GM23248 (cell line): ENCODE measurements at regions of chr4 and their contacts with region 1.

Region 1: DNA sequence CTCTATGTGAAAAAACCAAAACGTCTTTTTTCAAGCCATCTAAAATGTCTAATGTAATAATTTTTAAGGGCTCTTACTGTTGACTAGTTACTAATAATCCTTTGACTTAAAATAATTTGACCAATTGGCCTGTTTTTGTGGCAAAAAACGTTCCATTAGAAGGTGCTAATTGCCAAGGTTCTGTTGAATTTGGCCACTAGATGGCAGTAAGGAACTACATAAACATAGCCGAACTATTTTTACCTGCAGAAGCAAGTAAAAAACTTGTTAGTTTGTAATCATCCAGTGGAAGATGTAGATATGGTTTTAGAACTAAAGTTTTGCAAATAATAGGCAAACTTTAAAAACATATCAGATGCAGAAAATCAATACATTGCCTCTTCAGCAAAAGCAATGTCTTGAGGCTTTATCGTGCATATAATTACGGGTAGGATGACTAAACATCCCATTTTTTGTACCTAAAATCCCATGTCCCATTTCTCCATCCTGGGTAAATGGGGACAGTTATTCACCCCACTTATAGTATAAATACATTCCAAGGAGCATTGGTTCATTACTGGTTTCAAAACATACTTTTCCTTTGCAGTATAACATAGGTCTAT is 57.6 kb downstream of the PROM1 start:
- DNase-seq: peak; percentile 62
- H3K4me3 ChIP-seq: no peak overlapping the region
- H3K27ac ChIP-seq: no peak overlapping the region
- H3K4me1 ChIP-seq: no peaks in the 10 kb centered on the region
- H3K27me3 ChIP-seq: peaks cover 3% of the 10 kb centered on the region; the same call in 1 of the 2 replicates

Region 2: DNA sequence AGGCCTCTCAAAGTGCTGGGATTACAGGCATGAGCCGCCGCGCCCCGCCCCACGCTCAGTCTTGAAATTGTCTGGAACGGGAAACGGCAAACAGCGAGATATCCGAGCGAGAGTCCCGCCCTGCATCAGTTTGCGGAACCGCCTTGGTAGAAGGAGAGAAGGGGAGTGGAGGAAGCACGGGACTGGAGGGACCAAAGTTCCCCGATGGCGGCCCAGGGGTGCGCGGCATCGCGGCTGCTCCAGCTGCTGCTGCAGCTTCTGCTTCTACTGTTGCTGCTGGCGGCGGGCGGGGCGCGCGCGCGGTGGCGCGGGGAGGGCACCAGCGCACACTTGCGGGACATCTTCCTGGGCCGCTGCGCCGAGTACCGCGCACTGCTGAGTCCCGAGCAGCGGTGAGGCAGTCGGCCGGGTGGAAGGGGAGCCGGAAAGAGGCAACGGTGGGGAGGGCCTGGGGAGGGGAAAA is 323.3 kb before region 1 on chr4 and contains the start of gene BST1:
- in situ Hi-C with region 1: no loop called
- DNase-seq: peak; percentile 74
- H3K4me3 ChIP-seq: peak within 1 kb of the TSS; percentile 76
- H3K27ac ChIP-seq: no peak within 1 kb of the TSS
- H3K4me1 ChIP-seq: peaks cover 14% of the 10 kb centered on the region; the same call in 1 of the 2 replicates
- H3K27me3 ChIP-seq: no peaks in the 10 kb centered on the region
- total RNA-seq, gene BST1: 32.6 and 33.3 TPM in 2 replicates

Region 3: DNA sequence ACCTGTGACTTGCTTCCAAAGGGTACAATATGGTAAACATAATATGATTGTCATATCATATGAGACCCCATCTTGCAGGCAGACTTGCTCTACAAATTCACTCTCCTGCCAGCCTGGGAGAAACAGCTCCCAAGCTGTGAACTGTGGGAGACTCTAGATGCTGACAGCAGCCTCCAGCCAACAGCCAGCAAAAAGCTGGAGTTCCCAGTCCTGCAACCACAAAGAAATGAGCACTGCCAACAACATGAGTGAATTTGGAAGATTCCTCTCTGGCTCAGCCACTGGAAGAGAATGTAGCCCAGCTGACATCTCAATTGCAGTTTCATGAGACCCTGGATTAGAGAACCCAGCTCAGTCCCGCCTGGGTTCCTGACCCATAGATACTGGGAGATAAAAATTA is 1340.2 kb after region 1 on chr4:
- in situ Hi-C with region 1: loop called (anchors 25 kb)
- DNase-seq: peak; percentile 56
- H3K4me3 ChIP-seq: no peak overlapping the region
- H3K27ac ChIP-seq: no peak overlapping the region
- H3K4me1 ChIP-seq: peaks cover 5% of the 10 kb centered on the region
- H3K27me3 ChIP-seq: peaks cover 28% of the 10 kb centered on the region; the same call in 1 of the 2 replicates